ENCODE measurements at regions of chr6 and their contacts with region 1.

Region 1: GRCh38 chr6:117449549-117450439 is 24.1 kb upstream of the ROS1 start:
- DNase-seq: peak; percentile 20 to 82 (median 65)
- ATAC-seq: peak; percentile 58
- H3K4me3 ChIP-seq: no peak overlapping the region
- H3K4me3 Mint-ChIP-seq: no peak overlapping the region
- H3K27ac ChIP-seq: no peak overlapping the region
- H3K27ac Mint-ChIP-seq: no peak overlapping the region
- H3K4me1 ChIP-seq: no peaks in the 10 kb centered on the region
- H3K4me1 Mint-ChIP-seq: no peaks in the 10 kb centered on the region
- H3K27me3 ChIP-seq: peaks cover 0 to 3% of the 10 kb centered on the region in 2 experiments
- H3K27me3 Mint-ChIP-seq: peaks cover 26% of the 10 kb centered on the region
- CTCF ChIP-seq: peak; percentile 82

Region 2: GRCh38 chr6:117463762-117464665 is 14.2 kb after region 1 on chr6:
- CTCF ChIA-PET with region 1: interaction called, 16 read pairs
- POLR2A ChIA-PET with region 1: interaction called, 3 read pairs
- intact Hi-C with region 1: no loop called
- DNase-seq: no peak
- ATAC-seq: peak; percentile 48
- H3K4me3 ChIP-seq: no peak overlapping the region
- H3K4me3 Mint-ChIP-seq: no peak overlapping the region
- H3K27ac ChIP-seq: no peak overlapping the region
- H3K27ac Mint-ChIP-seq: no peak overlapping the region
- H3K4me1 ChIP-seq: no peaks in the 10 kb centered on the region
- H3K4me1 Mint-ChIP-seq: peaks cover 2% of the 10 kb centered on the region
- H3K27me3 ChIP-seq: no peaks in the 10 kb centered on the region
- H3K27me3 Mint-ChIP-seq: peaks cover 2% of the 10 kb centered on the region
- CTCF ChIP-seq: no peak

Region 3: GRCh38 chr6:117547688-117548621 is 98.2 kb after region 1 on chr6:
- CTCF ChIA-PET with region 1: interaction called, 60 read pairs
- POLR2A ChIA-PET with region 1: interaction called, 4 read pairs
- intact Hi-C with region 1: loop called in 1 of 2 experiments (anchors 1 kb)
- DNase-seq: peak; percentile 12 to 76 (median 50)
- ATAC-seq: peak; percentile 42
- H3K4me3 ChIP-seq: peak overlapping the region; percentile 55 to 69
- H3K4me3 Mint-ChIP-seq: peak overlapping the region; percentile 85
- H3K27ac ChIP-seq: peak overlapping the region; percentile 64 to 70
- H3K27ac Mint-ChIP-seq: peak overlapping the region; percentile 92
- H3K4me1 ChIP-seq: peaks cover 35% of the 10 kb centered on the region
- H3K4me1 Mint-ChIP-seq: peaks cover 43% of the 10 kb centered on the region
- H3K27me3 ChIP-seq: no peaks in the 10 kb centered on the region
- H3K27me3 Mint-ChIP-seq: no peaks in the 10 kb centered on the region
- CTCF ChIP-seq: no peak

Region 4: GRCh38 chr6:117568831-117569410 is 119.1 kb after region 1 on chr6:
- CTCF ChIA-PET with region 1: interaction called, 152 read pairs
- POLR2A ChIA-PET with region 1: no interaction called
- intact Hi-C with region 1: no loop called
- DNase-seq: no peak
- ATAC-seq: no peak
- H3K4me3 ChIP-seq: no peak overlapping the region
- H3K4me3 Mint-ChIP-seq: no peak overlapping the region
- H3K27ac ChIP-seq: no peak overlapping the region
- H3K27ac Mint-ChIP-seq: no peak overlapping the region
- H3K4me1 ChIP-seq: no peaks in the 10 kb centered on the region
- H3K4me1 Mint-ChIP-seq: peaks cover 2% of the 10 kb centered on the region
- H3K27me3 ChIP-seq: no peaks in the 10 kb centered on the region
- H3K27me3 Mint-ChIP-seq: no peaks in the 10 kb centered on the region
- CTCF ChIP-seq: no peak

Measured in CD8-positive, alpha-beta T cell (primary cell).